ENCODE measurements at regions of chr2 and their contacts with region 1.

Region 1: DNA sequence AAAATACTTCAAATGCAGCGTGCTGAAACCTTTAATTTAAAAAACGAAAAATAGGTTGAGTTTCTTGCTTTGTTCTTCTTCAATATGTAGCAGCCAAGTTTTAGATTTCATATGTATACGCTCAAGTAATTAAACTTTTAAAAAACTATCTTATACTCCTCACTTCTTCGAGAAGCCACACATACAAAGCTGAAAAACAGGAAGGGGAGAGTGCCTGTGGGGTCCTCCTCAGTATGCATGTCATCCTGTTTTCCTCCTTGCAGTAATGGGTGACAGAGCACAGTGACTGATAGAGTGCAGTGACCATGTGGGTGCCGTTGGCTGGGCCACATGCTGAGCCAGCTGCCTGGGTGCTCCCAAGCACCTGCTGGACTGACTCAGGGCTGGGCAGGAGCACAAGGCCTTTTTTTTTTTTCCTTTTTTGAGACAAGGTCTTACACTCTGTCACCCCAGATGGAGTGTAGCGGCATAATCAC is 33.3 kb downstream of the UXS1 start:
- DNase-seq: peak; percentile 57
- H3K4me3 Mint-ChIP-seq: peak overlapping the region; percentile 93
- H3K27ac Mint-ChIP-seq: peak overlapping the region; percentile 99
- H3K4me1 Mint-ChIP-seq: peaks cover 75% of the 10 kb centered on the region
- H3K27me3 Mint-ChIP-seq: no peaks in the 10 kb centered on the region

Region 2: GRCh38 chr2:105749583-105750400 is 411.0 kb before region 1 on chr2:
- CTCF ChIA-PET with region 1: no interaction called
- POLR2A ChIA-PET with region 1: interaction called, 10 read pairs
- DNase-seq: peak; percentile 57
- H3K4me3 Mint-ChIP-seq: peak overlapping the region; percentile 95
- H3K27ac Mint-ChIP-seq: peak overlapping the region; percentile 90
- H3K4me1 Mint-ChIP-seq: peaks cover 82% of the 10 kb centered on the region
- H3K27me3 Mint-ChIP-seq: no peaks in the 10 kb centered on the region

Region 3: DNA sequence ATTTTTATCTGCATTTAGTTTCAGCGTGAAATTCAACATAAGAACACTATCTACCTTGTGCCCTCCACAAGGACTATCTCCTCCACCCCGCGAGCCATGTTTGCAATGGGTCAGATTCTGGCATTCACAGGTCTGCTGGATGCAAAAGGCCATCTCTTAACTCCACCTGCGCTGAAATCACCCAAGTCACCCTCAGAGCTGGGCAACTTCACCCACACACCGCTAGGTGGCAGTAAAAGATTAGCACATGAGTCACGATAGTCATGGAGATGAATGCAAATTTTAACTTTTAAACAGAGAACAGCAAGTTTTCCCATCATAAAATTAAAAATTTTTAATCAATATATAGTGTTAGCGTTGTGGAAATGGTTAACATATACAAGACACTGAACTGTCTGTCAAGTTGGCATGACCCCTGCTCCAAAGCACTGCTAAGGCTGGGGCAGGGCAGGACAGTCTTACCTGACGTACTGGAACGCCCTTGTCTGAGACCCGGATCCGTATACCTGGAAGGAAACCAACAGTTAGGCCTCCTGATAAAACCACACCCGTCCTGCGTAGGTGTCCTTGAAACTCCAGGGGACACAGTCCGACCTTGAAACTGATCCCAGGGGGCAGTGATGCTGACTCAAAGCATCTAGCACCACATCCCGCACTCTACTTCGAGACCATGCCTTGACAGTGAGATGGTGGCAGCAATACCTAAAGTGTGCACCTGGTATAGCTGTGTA is 56.3 kb before region 1 on chr2:
- CTCF ChIA-PET with region 1: interaction called, 26 read pairs
- POLR2A ChIA-PET with region 1: interaction called, 3 read pairs
- DNase-seq: peak; percentile 70
- H3K4me3 Mint-ChIP-seq: no peak overlapping the region
- H3K27ac Mint-ChIP-seq: no peak overlapping the region
- H3K4me1 Mint-ChIP-seq: peaks cover 6% of the 10 kb centered on the region
- H3K27me3 Mint-ChIP-seq: no peaks in the 10 kb centered on the region

Region 4: DNA sequence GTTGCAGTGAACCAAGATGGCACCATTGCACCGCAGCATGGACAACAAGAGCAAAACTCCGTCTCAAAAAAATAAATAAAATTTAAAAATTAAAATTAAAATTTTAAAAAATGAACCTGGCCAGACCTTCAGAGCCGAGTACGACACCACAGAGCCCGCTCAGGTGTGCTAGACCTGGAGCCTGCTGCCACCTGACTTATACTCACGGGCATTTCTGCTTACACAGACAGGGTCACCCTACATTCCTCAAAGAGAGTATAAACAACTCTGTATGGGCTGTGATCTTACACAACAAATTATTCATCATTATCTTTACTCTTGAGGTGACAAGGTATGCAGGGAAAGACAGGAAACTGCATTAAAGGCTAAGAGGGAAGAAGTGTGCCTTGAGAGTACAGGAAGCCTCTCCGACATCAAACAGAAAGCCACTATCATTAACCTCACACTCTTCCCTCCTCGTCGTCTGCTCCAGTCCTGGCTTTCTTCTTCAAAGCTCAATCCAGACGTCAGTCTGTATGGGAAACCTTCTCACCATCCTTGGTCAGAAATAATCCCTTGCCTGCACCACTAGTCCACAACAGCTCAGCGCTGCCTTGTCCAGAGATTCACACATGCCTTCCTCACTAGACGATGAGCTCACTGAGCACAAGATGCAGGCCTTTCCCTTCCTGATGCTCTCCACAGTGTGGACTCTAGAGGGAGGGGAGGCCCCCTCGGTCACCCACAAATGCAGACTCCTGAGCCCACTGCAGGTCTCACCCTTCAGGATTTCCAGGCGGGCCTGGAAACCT is 22.9 kb before region 1 on chr2:
- CTCF ChIA-PET with region 1: interaction called, 68 read pairs
- POLR2A ChIA-PET with region 1: interaction called, 190 read pairs
- DNase-seq: no peak
- H3K4me3 Mint-ChIP-seq: peak overlapping the region; percentile 69
- H3K27ac Mint-ChIP-seq: peak overlapping the region; percentile 90
- H3K4me1 Mint-ChIP-seq: peaks cover 46% of the 10 kb centered on the region
- H3K27me3 Mint-ChIP-seq: no peaks in the 10 kb centered on the region

Region 5: DNA sequence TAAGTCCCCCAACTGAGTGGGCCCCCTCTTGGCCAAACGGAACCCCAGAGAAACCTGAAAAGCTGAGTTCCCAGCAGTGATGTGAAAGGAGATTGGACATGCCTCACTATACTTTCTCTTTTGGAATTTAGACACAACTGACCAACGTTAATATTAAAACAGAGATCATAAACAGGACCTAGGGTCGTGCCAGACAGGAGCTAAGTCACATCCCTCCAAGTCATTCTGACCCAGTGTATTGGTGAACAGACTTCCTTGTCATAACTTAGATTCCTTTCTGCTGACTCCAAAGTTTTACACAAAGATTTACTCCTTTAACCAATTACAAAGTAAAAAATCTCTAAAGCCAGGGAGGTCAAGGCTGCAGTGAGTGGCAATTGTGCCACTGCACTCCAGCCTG is 13.7 kb before region 1 on chr2:
- CTCF ChIA-PET with region 1: interaction called, 68 read pairs
- POLR2A ChIA-PET with region 1: interaction called, 190 read pairs
- DNase-seq: no peak
- H3K4me3 Mint-ChIP-seq: no peak overlapping the region
- H3K27ac Mint-ChIP-seq: peak overlapping the region; percentile 90
- H3K4me1 Mint-ChIP-seq: peaks cover 81% of the 10 kb centered on the region
- H3K27me3 Mint-ChIP-seq: no peaks in the 10 kb centered on the region

Region 6: DNA sequence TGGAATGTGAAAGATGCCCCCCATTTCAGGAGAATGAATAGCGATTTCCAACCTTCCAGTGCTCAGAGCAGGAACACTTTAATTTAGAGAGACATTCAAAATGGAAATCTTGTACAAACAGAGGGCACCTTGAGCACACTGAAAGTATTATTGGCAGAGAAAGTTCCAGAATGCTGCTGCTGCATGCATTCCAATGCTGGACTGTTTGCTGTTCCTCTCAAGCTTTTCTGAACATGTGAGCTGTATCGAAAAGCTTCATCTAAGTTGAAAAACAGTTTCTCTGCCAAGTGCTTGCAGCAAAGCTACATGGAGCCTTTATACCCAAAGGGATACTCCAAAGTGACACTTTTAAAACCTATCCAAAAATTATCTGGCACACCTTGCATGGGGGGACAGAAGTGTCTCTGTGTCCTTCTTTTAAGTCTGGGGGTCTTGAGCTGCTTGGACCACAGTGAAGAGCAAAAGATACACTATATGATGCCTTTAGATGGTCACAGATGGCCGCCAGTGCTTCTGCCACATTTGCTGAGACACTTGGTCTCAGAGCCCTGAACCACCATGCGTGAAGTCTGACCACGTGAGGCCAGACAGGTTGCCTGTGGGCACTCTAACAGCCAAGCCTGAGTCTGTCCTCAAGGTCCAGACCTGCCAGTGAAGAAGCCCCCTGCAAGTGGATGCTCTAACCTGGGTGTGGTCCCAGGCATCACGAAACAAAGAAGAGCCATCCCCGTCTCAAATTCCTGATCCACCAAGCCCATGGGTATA is 14.4 kb after region 1 on chr2:
- CTCF ChIA-PET with region 1: interaction called, 5 read pairs
- POLR2A ChIA-PET with region 1: interaction called, 17 read pairs
- DNase-seq: no peak
- H3K4me3 Mint-ChIP-seq: no peak overlapping the region
- H3K27ac Mint-ChIP-seq: no peak overlapping the region
- H3K4me1 Mint-ChIP-seq: peaks cover 12% of the 10 kb centered on the region
- H3K27me3 Mint-ChIP-seq: no peaks in the 10 kb centered on the region

Region 7: DNA sequence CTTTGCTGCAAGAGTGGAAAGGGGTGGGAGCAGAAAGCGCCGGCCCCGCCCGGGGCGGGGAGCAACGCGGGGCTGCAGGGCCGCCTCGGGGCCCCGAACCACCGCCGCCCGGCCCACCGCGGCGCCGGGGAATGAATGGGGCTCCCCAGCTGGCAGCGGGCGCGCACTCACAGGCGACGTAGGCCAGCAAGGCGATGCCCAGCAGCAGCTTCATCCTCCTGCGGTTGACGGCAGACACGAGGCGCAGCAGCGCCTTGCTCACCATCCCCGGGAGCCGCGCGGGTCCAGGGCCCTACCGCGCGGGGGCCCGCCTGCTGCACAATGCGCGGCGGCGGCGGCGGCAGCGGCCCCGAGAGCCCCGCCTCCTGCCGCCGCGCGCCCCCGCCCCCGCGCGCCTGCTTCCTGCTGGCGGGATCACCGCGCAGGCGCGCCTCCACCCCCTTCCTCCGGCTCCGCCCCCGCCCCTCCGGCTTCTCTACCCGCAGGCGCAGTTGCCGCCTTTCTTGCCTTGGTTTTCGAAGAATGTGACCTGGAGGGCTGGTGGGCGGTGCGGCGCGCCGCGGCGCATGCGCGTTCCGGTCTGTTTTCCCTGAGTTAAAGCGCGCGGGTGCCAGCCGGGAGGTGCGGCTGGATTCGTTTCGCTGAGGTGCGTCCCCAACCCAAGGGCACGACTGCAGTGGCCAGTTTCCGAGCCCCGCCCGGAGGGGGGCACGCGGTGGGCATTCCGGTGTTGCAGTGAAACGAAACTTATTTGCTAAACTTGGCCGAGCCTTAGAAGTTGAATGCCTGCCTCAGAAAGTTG is 33.4 kb after region 1 on chr2 and contains the start of gene UXS1:
- CTCF ChIA-PET with region 1: interaction called, 15 read pairs
- POLR2A ChIA-PET with region 1: interaction called, 110 read pairs
- DNase-seq: peak; percentile 98
- H3K4me3 Mint-ChIP-seq: peak within 1 kb of the TSS; percentile 91
- H3K27ac Mint-ChIP-seq: peak within 1 kb of the TSS; percentile 81
- H3K4me1 Mint-ChIP-seq: peaks cover 41% of the 10 kb centered on the region
- H3K27me3 Mint-ChIP-seq: no peaks in the 10 kb centered on the region
- total RNA-seq, gene UXS1: 74.4 to 74.6 TPM

Region 8: GRCh38 chr2:106358081-106358480 is 197.3 kb after region 1 on chr2:
- CTCF ChIA-PET with region 1: no interaction called
- POLR2A ChIA-PET with region 1: no interaction called
- DNase-seq: no peak
- H3K4me3 Mint-ChIP-seq: no peak overlapping the region
- H3K27ac Mint-ChIP-seq: no peak overlapping the region
- H3K4me1 Mint-ChIP-seq: no peaks in the 10 kb centered on the region
- H3K27me3 Mint-ChIP-seq: peaks cover 35% of the 10 kb centered on the region